Ascending aorta (tissue), 2 donors: ENCODE measurements at regions of chr19 and their contacts with region 1.

Region 1: DNA sequence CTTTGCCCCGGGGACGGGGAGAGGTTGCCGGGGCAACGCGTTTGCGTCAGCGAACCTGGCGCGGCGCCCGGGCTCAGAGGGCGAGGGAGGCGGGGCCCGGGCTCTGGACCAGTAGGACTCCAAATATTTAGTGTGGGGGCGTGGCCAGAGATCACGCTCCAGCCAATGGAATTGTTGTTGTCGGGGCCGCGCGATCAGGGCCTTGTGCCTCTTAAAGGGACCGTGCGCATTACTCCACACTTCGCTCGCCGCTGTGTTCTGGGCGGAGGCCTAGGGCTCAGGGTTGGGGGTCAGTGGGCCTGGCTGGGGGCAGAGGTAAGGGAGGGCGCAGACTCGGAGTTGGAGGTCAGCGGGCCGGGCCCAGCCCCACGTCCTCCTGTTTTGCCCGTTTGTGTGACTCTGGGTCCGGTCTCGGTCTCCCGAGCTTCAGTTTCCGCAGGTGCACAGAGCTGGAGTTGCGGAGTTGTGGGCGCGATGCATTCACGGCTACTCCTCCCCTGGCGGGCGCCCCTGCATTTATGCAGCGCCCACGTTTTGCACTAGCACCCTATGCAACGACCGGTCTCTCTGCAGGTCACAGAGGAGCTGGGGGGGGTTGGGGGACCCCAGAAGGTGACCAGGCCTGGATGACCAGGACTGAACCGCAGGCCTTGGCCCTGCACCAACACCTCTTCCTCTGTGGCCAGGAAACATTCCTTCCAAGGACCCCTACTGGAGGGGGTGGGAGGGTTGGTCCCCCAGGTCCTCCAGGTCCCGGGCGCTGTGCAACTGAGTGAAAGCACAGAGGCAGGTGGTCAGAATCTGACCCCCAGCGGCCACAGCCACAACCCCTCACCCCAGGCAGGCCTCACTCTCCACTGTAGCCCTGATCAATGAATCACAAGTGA is 10.7 kb upstream of the MKNK2 start:
- DNase-seq: peak; percentile 97 to 99
- H3K4me3 ChIP-seq: peak overlapping the region; percentile 70 to 85
- H3K27ac ChIP-seq: peak overlapping the region; percentile 98 to 99
- H3K4me1 ChIP-seq: peaks cover 12 to 36% of the 10 kb centered on the region in 2 donors
- H3K27me3 ChIP-seq: no peaks in the 10 kb centered on the region
- CTCF ChIP-seq: no peak

Region 2: GRCh38 chr19:2032296-2032941 is 29.3 kb before region 1 on chr19:
- intact Hi-C with region 1: loop called (anchors 1 kb)
- DNase-seq: peak; percentile 92 to 99
- H3K4me3 ChIP-seq: peak overlapping the region; percentile 32 to 43
- H3K27ac ChIP-seq: peak overlapping the region; percentile 88 to 92
- H3K4me1 ChIP-seq: peaks cover 0 to 16% of the 10 kb centered on the region in 2 donors
- H3K27me3 ChIP-seq: no peaks in the 10 kb centered on the region
- CTCF ChIP-seq: no peak

Region 3: DNA sequence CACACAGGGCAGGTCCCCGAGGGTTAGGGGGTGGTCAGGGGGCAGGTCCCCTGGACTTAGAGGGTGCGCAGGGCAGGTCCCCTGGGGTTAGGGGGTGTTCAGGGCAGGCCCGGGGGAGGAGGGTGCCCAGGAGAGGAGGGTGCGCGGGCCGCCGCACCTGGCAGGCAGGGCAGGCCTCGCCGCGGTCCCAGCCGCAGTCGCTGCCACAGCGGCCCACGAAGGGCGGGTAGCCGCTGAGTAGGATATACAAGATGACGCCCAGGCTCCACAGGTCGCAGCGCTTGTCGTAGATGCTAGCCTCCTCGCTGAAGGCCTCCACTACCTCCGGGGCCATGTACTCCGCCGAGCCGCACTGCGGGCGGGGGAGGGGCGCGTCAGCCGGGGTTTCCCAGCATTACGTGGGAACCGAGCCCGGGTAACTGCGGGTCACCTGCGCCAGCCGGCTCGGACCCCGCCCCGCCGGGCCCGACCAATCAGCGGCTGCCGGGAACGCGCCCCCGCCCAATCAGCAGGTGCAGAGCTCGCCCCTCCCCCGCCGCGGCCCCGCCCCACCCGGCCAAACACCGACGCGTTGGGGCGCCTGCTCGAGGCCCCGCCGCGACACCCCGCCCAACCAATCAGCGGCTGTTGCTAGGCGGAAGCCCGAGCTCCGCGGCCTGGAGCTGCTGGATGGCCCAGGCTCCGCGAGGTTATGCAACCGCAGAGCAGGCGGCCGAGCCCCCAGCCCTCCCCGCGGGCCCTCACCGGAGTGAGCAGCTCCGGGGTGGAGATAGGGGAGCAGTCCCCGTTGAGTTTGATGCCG is 19.9 kb before region 1 on chr19:
- intact Hi-C with region 1: loop called (anchors 1 kb)
- DNase-seq: peak; percentile 94 to 99
- H3K4me3 ChIP-seq: peak overlapping the region; percentile 4 to 57
- H3K27ac ChIP-seq: peak overlapping the region; percentile 91 to 94
- H3K4me1 ChIP-seq: peaks cover 18 to 27% of the 10 kb centered on the region in 2 donors
- H3K27me3 ChIP-seq: no peaks in the 10 kb centered on the region
- CTCF ChIP-seq: no peak

Region 4: GRCh38 chr19:2050991-2051772 is 10.6 kb before region 1 on chr19 and contains the start of gene MKNK2:
- intact Hi-C with region 1: loop called (anchors 1 kb)
- DNase-seq: peak in 1 of 2 donors; percentile 93
- H3K4me3 ChIP-seq: peak within 1 kb of the TSS; percentile 98
- H3K27ac ChIP-seq: peak within 1 kb of the TSS; percentile 92 to 97
- H3K4me1 ChIP-seq: peaks cover 46% of the 10 kb centered on the region in 2 donors
- H3K27me3 ChIP-seq: no peaks in the 10 kb centered on the region
- CTCF ChIP-seq: peak; percentile 41 to 63 (median 48)
- total RNA-seq, gene MKNK2: 228 TPM